WTC11 (cell line): ENCODE measurements at regions of chr12 and their contacts with region 1.

Region 1: GRCh38 chr12:55715833-55716581 is at the start of gene BLOC1S1:
- DNase-seq: peak; percentile 96
- ATAC-seq: peak; percentile 88
- H3K4me3 Mint-ChIP-seq: peak within 1 kb of the TSS; percentile 85
- H3K27ac Mint-ChIP-seq: peak within 1 kb of the TSS; percentile 84
- H3K4me1 Mint-ChIP-seq: peaks cover 37% of the 10 kb centered on the region
- H3K27me3 Mint-ChIP-seq: peaks cover 24% of the 10 kb centered on the region
- CTCF ChIP-seq: no peak
- total RNA-seq, gene BLOC1S1: 81.9 to 97.1 TPM (median 95.1 TPM) in 3 replicates

Region 2: DNA sequence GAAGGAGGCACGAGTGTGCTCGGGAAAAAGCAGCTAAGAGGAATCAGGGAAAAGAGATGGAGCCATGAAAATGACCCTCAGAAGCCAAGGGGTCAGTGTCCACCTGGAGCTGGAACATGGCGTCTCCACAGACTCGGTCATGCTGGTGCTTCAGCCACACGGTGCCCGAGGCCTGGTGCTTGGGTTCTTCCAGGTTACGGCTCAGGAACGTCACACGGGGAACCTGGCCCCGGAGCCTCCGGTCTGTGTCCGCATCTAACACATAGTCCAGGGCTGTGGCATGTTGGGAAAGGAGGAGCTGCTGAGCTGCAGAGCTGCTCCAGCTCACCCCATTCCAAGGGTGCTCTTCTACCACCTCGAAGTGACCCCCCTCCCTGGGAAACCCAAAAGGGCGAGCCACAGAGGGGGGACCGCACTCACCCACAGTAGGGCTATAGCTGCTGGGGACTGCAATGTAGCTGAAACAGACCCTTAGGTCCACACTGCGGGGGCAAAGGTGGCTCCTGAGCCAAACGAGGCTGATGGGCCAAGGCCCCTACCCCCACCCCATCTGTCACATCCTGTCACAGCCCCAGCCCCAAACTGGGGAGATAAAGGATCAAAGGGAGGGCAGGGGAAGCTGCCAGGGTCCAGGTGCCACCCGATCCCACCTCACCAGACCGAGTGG is 19.1 kb before region 1 on chr12:
- CTCF ChIA-PET with region 1: no interaction called
- POLR2A ChIA-PET with region 1: no interaction called
- DNase-seq: no peak
- ATAC-seq: no peak
- H3K4me3 Mint-ChIP-seq: no peak overlapping the region
- H3K27ac Mint-ChIP-seq: peak overlapping the region; percentile 32; the same call in 1 of the 2 replicates
- H3K4me1 Mint-ChIP-seq: no peaks in the 10 kb centered on the region
- H3K27me3 Mint-ChIP-seq: no peaks in the 10 kb centered on the region
- CTCF ChIP-seq: no peak

Region 3: GRCh38 chr12:55728939-55729823 is 13.2 kb after region 1 on chr12 and contains the start of gene CD63:
- CTCF ChIA-PET with region 1: interaction called, 27 read pairs
- POLR2A ChIA-PET with region 1: interaction called, 21 read pairs
- DNase-seq: peak; percentile 87
- ATAC-seq: peak; percentile 75
- H3K4me3 Mint-ChIP-seq: peak within 1 kb of the TSS; percentile 88
- H3K27ac Mint-ChIP-seq: peak within 1 kb of the TSS; percentile 75
- H3K4me1 Mint-ChIP-seq: peaks cover 31% of the 10 kb centered on the region
- H3K27me3 Mint-ChIP-seq: no peaks in the 10 kb centered on the region
- CTCF ChIP-seq: no peak
- total RNA-seq, gene CD63: 409 to 419 TPM (median 414 TPM) in 3 replicates

Region 4: DNA sequence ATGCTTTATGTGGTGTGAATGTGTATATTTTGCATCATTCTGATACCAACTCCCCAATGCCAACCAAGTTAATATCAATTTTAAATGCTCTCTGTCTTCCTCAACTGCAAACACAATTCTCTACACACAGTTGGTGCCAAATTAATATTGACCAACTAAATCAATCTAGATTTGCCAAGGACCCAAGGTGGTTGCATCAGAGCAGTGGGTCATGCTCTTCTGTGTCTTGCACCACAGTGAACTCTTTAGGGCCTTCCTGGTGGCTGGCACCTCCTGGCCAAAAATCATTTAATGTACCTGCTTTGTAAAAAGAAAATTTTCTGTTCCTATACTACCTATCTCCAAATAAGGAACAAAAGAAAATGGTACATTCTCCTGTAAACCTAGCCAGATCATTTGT is 564.8 kb after region 1 on chr12:
- CTCF ChIA-PET with region 1: no interaction called
- POLR2A ChIA-PET with region 1: no interaction called
- DNase-seq: no peak
- ATAC-seq: no peak
- H3K4me3 Mint-ChIP-seq: no peak overlapping the region
- H3K27ac Mint-ChIP-seq: no peak overlapping the region
- H3K4me1 Mint-ChIP-seq: peaks cover under 1% of the 10 kb centered on the region; the same call in 1 of the 2 replicates
- H3K27me3 Mint-ChIP-seq: no peaks in the 10 kb centered on the region
- CTCF ChIP-seq: no peak